ENCODE measurements at regions of chrX and their contacts with region 1.

Region 1: DNA sequence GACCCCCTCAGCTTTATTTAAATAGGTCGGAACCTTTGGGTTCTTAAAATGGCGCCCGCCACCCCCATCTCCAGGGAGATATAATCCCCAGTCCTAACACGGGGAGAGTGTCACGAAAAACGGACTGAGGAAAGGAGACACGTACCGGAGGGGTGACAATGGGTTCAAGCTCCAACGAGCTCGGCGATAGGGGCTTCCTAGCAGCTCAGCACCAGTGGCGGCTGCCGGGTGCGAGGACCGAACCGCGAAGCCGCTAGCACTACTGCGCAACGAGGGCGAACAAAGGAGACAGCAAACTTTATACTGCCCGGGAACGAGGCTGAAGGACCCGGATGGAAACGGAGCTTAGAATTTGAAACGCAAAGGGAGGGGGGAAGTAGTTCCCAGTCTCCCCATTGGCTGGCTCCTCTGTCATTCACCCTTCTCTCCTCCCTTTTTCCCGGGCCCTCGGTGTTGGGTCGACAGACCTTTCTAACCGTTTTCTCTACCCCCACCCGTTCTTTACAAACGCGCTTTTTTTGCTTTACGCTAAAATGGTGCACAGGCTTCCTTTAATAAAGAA is at the start of gene RBMX:
- DNase-seq: peak; percentile 81 to 92
- H3K4me3 ChIP-seq: peak within 1 kb of the TSS; percentile 97
- H3K27ac ChIP-seq: peak within 1 kb of the TSS; percentile 69
- H3K4me1 ChIP-seq: peaks cover 4% of the 10 kb centered on the region; the same call in 1 of the 2 replicates
- H3K27me3 ChIP-seq: no peaks in the 10 kb centered on the region
- CTCF ChIP-seq: no peak
- total RNA-seq, gene RBMX: 275 and 285 TPM in 2 replicates

Region 2: GRCh38 chrX:136867518-136867917 is 13.0 kb before region 1 on chrX:
- CTCF ChIA-PET with region 1: no interaction called
- POLR2A ChIA-PET with region 1: interaction called, 12 read pairs
- intact Hi-C with region 1: no loop called
- DNase-seq: no peak
- H3K4me3 ChIP-seq: no peak overlapping the region
- H3K27ac ChIP-seq: no peak overlapping the region
- H3K4me1 ChIP-seq: no peaks in the 10 kb centered on the region
- H3K27me3 ChIP-seq: no peaks in the 10 kb centered on the region
- CTCF ChIP-seq: no peak

Measured in PC-9 (cell line).